Calu3 (cell line): ENCODE measurements at regions of chr18 and their contacts with region 1.

Region 1: DNA sequence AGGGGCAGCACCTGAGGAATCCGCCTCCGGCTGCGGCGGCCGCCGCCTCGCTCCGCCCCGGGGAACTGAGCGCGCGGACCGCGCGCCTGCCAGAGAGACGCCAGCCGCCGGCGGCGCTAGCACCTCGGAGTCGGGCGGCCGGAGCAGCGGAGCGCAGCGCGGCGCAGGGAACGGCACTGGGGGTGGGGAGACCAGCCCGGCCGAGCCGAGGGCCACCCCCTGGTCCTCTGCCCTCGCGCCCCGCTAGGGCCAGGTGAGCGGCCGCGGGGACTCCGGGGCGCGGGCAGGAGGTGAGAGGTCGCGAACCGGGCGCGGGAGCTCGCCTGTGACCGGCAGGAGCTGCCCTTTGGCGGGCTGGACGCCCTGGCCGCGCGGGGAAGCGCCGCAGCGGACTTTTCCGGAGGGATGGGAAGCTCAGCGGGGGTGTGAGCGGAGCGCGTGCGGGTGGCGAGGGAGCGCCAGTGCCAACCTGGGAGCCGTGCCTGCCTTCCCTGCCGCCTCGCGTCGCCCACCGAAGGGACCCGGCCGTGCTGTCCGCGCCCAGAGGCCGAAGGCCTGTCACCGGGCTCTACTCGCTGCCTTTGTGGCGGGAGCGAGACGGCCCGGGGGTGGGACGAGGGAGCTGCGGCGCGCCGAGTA is at the start of gene GREB1L:
- DNase-seq: peak; percentile 85
- H3K4me3 Mint-ChIP-seq: peak within 1 kb of the TSS; percentile 76
- H3K27ac Mint-ChIP-seq: no peak within 1 kb of the TSS
- H3K4me1 Mint-ChIP-seq: peaks cover 10% of the 10 kb centered on the region
- H3K27me3 Mint-ChIP-seq: no peaks in the 10 kb centered on the region
- CTCF ChIP-seq: no peak
- total RNA-seq, gene GREB1L: 3.8 and 4.5 TPM in 2 replicates

Region 2: GRCh38 chr18:21203096-21203495 is 39.2 kb before region 1 on chr18:
- CTCF ChIA-PET with region 1: no interaction called
- intact Hi-C with region 1: no loop called
- DNase-seq: no peak
- H3K4me3 Mint-ChIP-seq: no peak overlapping the region
- H3K27ac Mint-ChIP-seq: no peak overlapping the region
- H3K4me1 Mint-ChIP-seq: no peaks in the 10 kb centered on the region
- H3K27me3 Mint-ChIP-seq: no peaks in the 10 kb centered on the region
- CTCF ChIP-seq: no peak

Region 3: DNA sequence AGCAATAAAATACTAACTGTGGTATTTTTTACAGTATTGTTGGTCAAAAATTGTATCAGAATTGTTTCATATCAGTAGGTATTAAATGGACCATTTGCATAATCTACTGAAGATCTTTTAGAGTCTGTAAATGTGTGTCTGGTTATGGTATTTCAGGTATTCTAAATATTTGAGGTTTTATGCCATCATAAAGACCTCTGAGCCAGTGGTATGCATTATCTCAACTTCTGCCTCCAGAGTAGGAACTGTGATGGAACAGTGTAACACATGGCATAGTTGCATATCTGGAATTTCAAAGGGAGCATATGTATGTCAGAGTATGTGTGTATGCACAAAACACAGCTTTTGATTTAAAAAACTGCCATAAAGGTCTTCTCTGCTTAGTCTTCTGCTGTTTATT is 15.1 kb after region 1 on chr18:
- CTCF ChIA-PET with region 1: interaction called, 5 read pairs
- intact Hi-C with region 1: loop called (anchors 1 kb)
- DNase-seq: no peak
- H3K4me3 Mint-ChIP-seq: no peak overlapping the region
- H3K27ac Mint-ChIP-seq: no peak overlapping the region
- H3K4me1 Mint-ChIP-seq: no peaks in the 10 kb centered on the region
- H3K27me3 Mint-ChIP-seq: no peaks in the 10 kb centered on the region
- CTCF ChIP-seq: no peak